Lower leg skin (tissue), 4 donors: ENCODE measurements at regions of chr17 and their contacts with region 1.

Region 1: DNA sequence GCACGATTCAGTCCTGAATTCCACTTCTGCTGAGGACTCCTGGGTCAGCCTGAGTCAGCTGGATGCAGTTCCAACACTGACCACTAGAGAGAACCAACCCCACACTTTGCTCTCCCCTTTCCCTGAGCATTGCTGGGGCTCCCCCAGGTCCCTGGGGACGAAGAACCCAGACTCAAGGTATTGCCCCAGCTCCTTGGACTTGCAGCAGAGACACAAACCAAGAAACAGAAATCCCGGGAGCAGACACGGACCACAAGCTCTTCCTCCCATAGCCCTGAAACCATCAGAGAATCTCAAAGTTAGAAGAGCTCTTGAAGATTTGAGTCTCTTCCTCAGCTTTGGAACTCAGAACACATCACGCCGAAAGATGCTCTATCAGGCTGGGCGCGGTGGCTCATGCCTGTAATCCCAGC is 678 bp upstream of the GH1 start:
- DNase-seq: peak in 1 of 2 donors; percentile 47
- H3K4me3 ChIP-seq: no peak overlapping the region
- CTCF ChIP-seq: peak in 2 of 3 donors; percentile 35 to 95
- POLR2A ChIP-seq: no peak

Region 2: DNA sequence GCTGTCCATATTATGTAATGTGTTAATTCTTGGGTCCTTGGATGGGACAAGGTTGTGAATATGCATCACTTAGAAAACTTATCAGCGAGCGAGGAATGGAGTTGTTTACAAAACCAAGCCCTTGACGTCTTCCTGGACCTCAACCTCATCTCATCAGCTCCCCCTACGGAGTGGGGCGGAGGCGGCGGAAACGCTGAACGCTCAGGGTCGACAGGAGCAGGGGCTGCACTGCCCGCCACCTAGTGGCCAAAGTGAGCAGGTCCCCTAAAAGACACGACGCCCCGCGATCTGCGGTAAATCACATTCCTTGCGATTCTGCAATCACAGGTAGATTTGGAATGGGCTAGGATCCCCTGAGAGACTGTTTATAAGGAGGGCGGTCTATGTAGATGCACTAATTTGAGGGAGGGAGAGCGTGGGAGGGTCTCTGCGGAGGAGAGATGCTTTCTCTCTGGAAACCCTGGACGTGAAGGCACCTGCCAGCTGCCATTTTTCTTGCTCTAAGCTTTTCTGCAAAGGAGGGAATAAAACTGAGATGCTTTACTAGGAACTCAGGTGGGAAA is 106.5 kb after region 1 on chr17:
- intact Hi-C with region 1: loop called (anchors 10 kb)
- DNase-seq: peak; percentile 50 to 96
- H3K4me3 ChIP-seq: no peak overlapping the region
- CTCF ChIP-seq: peak in 1 of 3 donors; percentile 77
- POLR2A ChIP-seq: no peak

Region 3: GRCh38 chr17:64129764-64130558 is 210.6 kb after region 1 on chr17 and contains the start of gene ERN1:
- intact Hi-C with region 1: loop called (anchors 10 kb)
- DNase-seq: peak; percentile 89 to 98
- H3K4me3 ChIP-seq: peak within 1 kb of the TSS; percentile 71
- CTCF ChIP-seq: no peak
- POLR2A ChIP-seq: no peak
- total RNA-seq, gene ERN1: 18.2 to 44.0 (median 22.8) TPM

Region 4: GRCh38 chr17:64281962-64282727 is 362.8 kb after region 1 on chr17:
- intact Hi-C with region 1: loop called (anchors 10 kb)
- DNase-seq: peak in 1 of 2 donors; percentile 31
- H3K4me3 ChIP-seq: no peak overlapping the region
- CTCF ChIP-seq: peak in 1 of 3 donors; percentile 56
- POLR2A ChIP-seq: no peak